Cardiac septum (tissue), 1 donor: ENCODE measurements at regions of chr16 and their contacts with region 1.

Region 1: DNA sequence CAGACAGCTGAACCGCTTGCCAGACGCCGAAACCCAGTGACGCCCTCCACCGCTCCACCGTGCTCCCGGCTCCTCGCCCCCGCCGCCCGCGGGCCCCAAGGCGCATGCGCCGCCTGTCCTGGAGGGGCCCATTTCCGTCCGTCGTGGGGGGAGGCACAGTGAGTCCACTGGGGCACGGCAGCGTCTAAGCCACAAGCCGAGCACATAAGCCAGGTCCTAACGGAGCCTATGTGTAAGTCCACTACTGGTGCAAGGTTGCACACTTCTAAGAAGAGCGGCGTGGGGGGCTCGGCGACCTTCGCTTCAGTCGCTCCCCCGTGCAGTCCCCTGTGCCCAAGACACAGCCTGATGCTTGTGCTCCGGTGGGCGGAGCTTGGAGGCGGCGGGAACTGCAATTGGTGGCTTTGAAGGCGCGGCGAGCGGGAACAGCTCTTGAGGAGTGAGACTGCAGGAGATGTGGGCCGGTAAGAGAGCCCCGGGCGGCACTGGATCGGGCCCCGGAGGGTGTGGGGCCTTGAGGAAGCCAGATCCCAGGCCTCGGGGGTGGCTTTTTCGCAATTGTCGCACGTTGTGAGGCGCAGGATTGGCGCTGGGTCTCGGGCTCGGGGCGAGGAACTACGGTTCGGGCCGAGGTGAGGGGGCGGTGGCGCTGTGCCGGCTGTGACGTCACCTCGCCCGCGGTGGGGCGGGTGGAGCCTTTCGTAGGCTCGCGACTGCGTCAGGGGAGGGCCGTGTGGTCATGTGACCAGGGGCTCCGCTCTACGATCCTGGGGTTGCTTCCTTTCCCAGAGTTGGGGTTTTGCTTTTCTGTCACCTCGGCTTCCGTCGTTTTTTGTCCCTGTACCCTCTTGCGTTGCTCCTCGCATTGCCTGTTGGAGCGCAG is at the starts of genes CENPN and CMC2:
- DNase-seq: peak; percentile 99
- total RNA-seq, gene CENPN: 10.0 TPM
- total RNA-seq, gene CMC2: 112 TPM

Region 2: GRCh38 chr16:82169861-82170845 is 1163.1 kb after region 1 on chr16 and contains the start of gene MPHOSPH6:
- intact Hi-C with region 1: loop called (anchors 10 kb)
- DNase-seq: peak; percentile 93
- total RNA-seq, gene MPHOSPH6: 10.2 TPM